Vagina (tissue), 2 donors: ENCODE measurements at regions of chr18 and their contacts with region 1.

Region 1: GRCh38 chr18:13435596-13436327 is 217.2 kb downstream of the LDLRAD4 start:
- DNase-seq: no peak
- H3K4me3 ChIP-seq: no peak overlapping the region
- H3K27ac ChIP-seq: peak overlapping the region; percentile 35
- H3K4me1 ChIP-seq: peaks cover 31% of the 10 kb centered on the region
- H3K27me3 ChIP-seq: no peaks in the 10 kb centered on the region
- CTCF ChIP-seq: no peak
- POLR2A ChIP-seq: no peak

Region 2: GRCh38 chr18:12394428-12394827 is 1041.3 kb before region 1 on chr18:
- intact Hi-C with region 1: no loop called
- DNase-seq: no peak
- H3K4me3 ChIP-seq: no peak overlapping the region
- H3K27ac ChIP-seq: no peak overlapping the region
- H3K4me1 ChIP-seq: no peaks in the 10 kb centered on the region
- H3K27me3 ChIP-seq: no peaks in the 10 kb centered on the region
- CTCF ChIP-seq: no peak
- POLR2A ChIP-seq: no peak

Region 3: DNA sequence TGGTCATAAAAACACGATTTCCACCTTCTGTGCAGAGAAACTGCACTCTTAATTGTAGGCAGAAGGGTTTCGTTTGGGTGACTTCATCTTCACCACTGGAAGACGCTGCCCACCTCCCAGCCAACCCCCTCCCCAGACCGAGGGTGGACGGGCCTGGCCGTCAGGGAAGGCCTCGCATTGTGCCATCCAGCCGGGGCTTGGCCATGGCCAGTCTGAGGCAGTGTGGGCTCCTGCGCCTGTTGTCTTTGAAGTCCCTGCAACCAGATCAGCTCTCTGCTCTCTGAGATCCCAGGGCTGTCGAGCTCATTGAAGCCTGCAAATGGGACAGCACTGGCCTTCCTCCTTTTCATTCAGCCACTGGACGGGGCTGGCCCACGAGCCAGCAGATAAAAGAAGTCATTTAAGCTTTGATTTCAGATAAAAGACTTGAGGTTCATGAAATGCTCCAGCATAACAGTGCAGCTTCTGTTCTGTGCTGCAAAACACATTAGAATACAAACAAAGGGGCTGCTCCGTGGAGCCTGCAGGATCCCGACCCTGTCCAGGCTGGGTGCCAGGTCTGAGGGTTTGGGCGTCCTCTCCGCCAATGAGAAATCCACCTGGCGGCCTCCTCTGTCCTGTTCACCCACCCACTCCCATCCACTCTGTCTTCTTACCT is 36.3 kb after region 1 on chr18:
- intact Hi-C with region 1: no loop called
- DNase-seq: no peak
- H3K4me3 ChIP-seq: no peak overlapping the region
- H3K27ac ChIP-seq: no peak overlapping the region
- H3K4me1 ChIP-seq: no peaks in the 10 kb centered on the region
- H3K27me3 ChIP-seq: no peaks in the 10 kb centered on the region
- CTCF ChIP-seq: no peak
- POLR2A ChIP-seq: no peak

Region 4: DNA sequence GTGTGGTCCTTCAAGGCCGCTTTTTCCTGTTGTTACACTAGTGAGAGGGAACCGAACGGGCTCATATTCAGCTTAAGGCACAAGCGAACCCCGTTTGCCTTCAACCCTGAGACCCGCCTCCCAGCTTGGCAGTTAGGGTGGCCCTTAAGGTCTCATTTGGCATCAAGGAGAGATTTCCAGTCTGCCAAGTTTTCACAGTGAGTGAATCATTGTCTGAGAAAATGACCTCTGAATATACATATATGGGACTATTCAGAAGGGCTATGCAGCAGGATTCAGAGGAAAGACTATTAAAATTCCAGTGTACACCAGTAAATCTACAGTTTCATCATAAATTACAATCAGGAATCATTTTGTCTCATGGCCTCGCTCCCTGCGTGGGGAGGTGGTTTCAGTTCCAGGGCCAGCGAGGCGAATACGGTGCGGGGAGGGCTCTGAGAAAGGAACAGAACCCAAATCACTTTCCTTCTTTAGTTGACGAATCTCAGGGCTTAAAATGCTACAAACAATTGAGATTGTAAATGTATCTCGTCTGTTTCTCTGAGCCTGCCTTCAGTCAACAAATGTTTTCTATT is 59.2 kb after region 1 on chr18:
- intact Hi-C with region 1: loop called (anchors 10 kb)
- DNase-seq: no peak
- H3K4me3 ChIP-seq: peak overlapping the region in 1 of 2 donors; percentile 33
- H3K27ac ChIP-seq: peak overlapping the region; percentile 27
- H3K4me1 ChIP-seq: peaks cover 1% of the 10 kb centered on the region
- H3K27me3 ChIP-seq: no peaks in the 10 kb centered on the region
- CTCF ChIP-seq: no peak
- POLR2A ChIP-seq: no peak

Region 5: GRCh38 chr18:13895505-13896033 is 459.8 kb after region 1 on chr18:
- intact Hi-C with region 1: no loop called
- DNase-seq: no peak
- H3K4me3 ChIP-seq: no peak overlapping the region
- H3K27ac ChIP-seq: no peak overlapping the region
- H3K4me1 ChIP-seq: no peaks in the 10 kb centered on the region
- H3K27me3 ChIP-seq: no peaks in the 10 kb centered on the region
- CTCF ChIP-seq: no peak
- POLR2A ChIP-seq: no peak

Region 6: GRCh38 chr18:13934676-13935075 is 498.9 kb after region 1 on chr18:
- intact Hi-C with region 1: no loop called
- DNase-seq: no peak
- H3K4me3 ChIP-seq: no peak overlapping the region
- H3K27ac ChIP-seq: no peak overlapping the region
- H3K4me1 ChIP-seq: no peaks in the 10 kb centered on the region
- H3K27me3 ChIP-seq: no peaks in the 10 kb centered on the region
- CTCF ChIP-seq: no peak
- POLR2A ChIP-seq: no peak